Naive thymus-derived CD4-positive, alpha-beta T cell (primary cell): ENCODE measurements at regions of chr15 and their contacts with region 1.

Region 1: GRCh38 chr15:60649845-60650548 is 171.1 kb upstream of the ICE2 start:
- DNase-seq: peak in 8 of 9 donors; percentile 42 to 78 (median 62)
- ATAC-seq: peak; percentile 90
- H3K4me3 ChIP-seq: peak overlapping the region; percentile 33
- H3K4me3 Mint-ChIP-seq: peak overlapping the region; percentile 66 to 84 (median 75)
- H3K27ac ChIP-seq: no peak overlapping the region
- H3K27ac Mint-ChIP-seq: peak overlapping the region; percentile 55 to 96 (median 82)
- H3K4me1 ChIP-seq: peaks cover 18 to 23% of the 10 kb centered on the region in 2 donors
- H3K4me1 Mint-ChIP-seq: peaks cover 24 to 50% (median 39%) of the 10 kb centered on the region in 7 donors
- H3K27me3 ChIP-seq: no peaks in the 10 kb centered on the region
- H3K27me3 Mint-ChIP-seq: peaks cover 0 to 3% (median 0%) of the 10 kb centered on the region in 5 donors

Region 2: GRCh38 chr15:60592371-60593169 is 57.4 kb before region 1 on chr15:
- CTCF ChIA-PET with region 1: interaction called, 3 read pairs
- POLR2A ChIA-PET with region 1: interaction called, 3 read pairs
- intact Hi-C with region 1: loop called in 1 of 2 experiments (anchors 1 kb)
- DNase-seq: peak; percentile 72 to 89 (median 86)
- ATAC-seq: peak; percentile 95
- H3K4me3 ChIP-seq: peak overlapping the region; percentile 75
- H3K4me3 Mint-ChIP-seq: peak overlapping the region; percentile 84 to 89 (median 86)
- H3K27ac ChIP-seq: peak overlapping the region; percentile 96
- H3K27ac Mint-ChIP-seq: peak overlapping the region; percentile 83 to 93 (median 85)
- H3K4me1 ChIP-seq: peaks cover 6 to 29% of the 10 kb centered on the region in 2 donors
- H3K4me1 Mint-ChIP-seq: peaks cover 19 to 53% (median 48%) of the 10 kb centered on the region in 7 donors
- H3K27me3 ChIP-seq: no peaks in the 10 kb centered on the region
- H3K27me3 Mint-ChIP-seq: peaks cover 0 to 4% (median 0%) of the 10 kb centered on the region in 5 donors

Region 3: GRCh38 chr15:60720493-60721256 is 70.7 kb after region 1 on chr15:
- CTCF ChIA-PET with region 1: no interaction called
- POLR2A ChIA-PET with region 1: no interaction called
- intact Hi-C with region 1: loop called in 1 of 2 experiments (anchors 2 kb)
- DNase-seq: peak in 8 of 9 donors; percentile 31 to 68 (median 44)
- ATAC-seq: peak; percentile 81
- H3K4me3 ChIP-seq: peak overlapping the region; percentile 47
- H3K4me3 Mint-ChIP-seq: peak overlapping the region; percentile 64 to 84 (median 80)
- H3K27ac ChIP-seq: peak overlapping the region; percentile 6
- H3K27ac Mint-ChIP-seq: peak overlapping the region; percentile 63 to 92 (median 77)
- H3K4me1 ChIP-seq: peaks cover 27% of the 10 kb centered on the region in 2 donors
- H3K4me1 Mint-ChIP-seq: peaks cover 29 to 65% (median 53%) of the 10 kb centered on the region in 7 donors
- H3K27me3 ChIP-seq: no peaks in the 10 kb centered on the region
- H3K27me3 Mint-ChIP-seq: no peaks in the 10 kb centered on the region

Region 4: GRCh38 chr15:60865507-60865906 is 215.5 kb after region 1 on chr15:
- CTCF ChIA-PET with region 1: interaction called, 16 read pairs
- POLR2A ChIA-PET with region 1: no interaction called
- intact Hi-C with region 1: loop called in 1 of 2 experiments (anchors 1 kb)
- DNase-seq: no peak
- ATAC-seq: no peak
- H3K4me3 ChIP-seq: no peak overlapping the region
- H3K4me3 Mint-ChIP-seq: no peak overlapping the region
- H3K27ac ChIP-seq: no peak overlapping the region
- H3K27ac Mint-ChIP-seq: peak overlapping the region in 1 of 9 donors; percentile 46
- H3K4me1 ChIP-seq: peaks cover 3 to 6% of the 10 kb centered on the region in 2 donors
- H3K4me1 Mint-ChIP-seq: peaks cover 2 to 22% (median 16%) of the 10 kb centered on the region in 7 donors
- H3K27me3 ChIP-seq: no peaks in the 10 kb centered on the region
- H3K27me3 Mint-ChIP-seq: peaks cover 0 to 8% (median 0%) of the 10 kb centered on the region in 5 donors

Region 5: GRCh38 chr15:60905587-60905986 is 255.6 kb after region 1 on chr15:
- CTCF ChIA-PET with region 1: no interaction called
- POLR2A ChIA-PET with region 1: no interaction called
- intact Hi-C with region 1: loop called in 1 of 2 experiments (anchors 1 kb)
- DNase-seq: peak in 6 of 9 donors; percentile 24 to 45 (median 38)
- ATAC-seq: peak; percentile 68
- H3K4me3 ChIP-seq: no peak overlapping the region
- H3K4me3 Mint-ChIP-seq: no peak overlapping the region
- H3K27ac ChIP-seq: no peak overlapping the region
- H3K27ac Mint-ChIP-seq: peak overlapping the region in 1 of 9 donors; percentile 16
- H3K4me1 ChIP-seq: no peaks in the 10 kb centered on the region
- H3K4me1 Mint-ChIP-seq: peaks cover 0 to 38% (median 2%) of the 10 kb centered on the region in 7 donors
- H3K27me3 ChIP-seq: no peaks in the 10 kb centered on the region
- H3K27me3 Mint-ChIP-seq: peaks cover 0 to 17% (median 0%) of the 10 kb centered on the region in 5 donors